Head of caudate nucleus (tissue), 42 donors: ENCODE measurements at regions of chr4 and their contacts with region 1.

Region 1: GRCh38 chr4:57309658-57310057 is 199.5 kb upstream of the IGFBP7 start:
- DNase-seq: no peak

Region 2: GRCh38 chr4:57074744-57075143 is 234.9 kb before region 1 on chr4:
- intact Hi-C with region 1: no loop called
- DNase-seq: no peak

Region 3: GRCh38 chr4:57168982-57169381 is 140.7 kb before region 1 on chr4:
- intact Hi-C with region 1: loop called (anchors 5 kb)
- DNase-seq: peak in 1 of 42 donors; percentile 44